ENCODE measurements at regions of chr3 and their contacts with region 1.

Region 1: GRCh38 chr3:52339612-52340011 is 23.5 kb downstream of the DNAH1 start:
- DNase-seq: peak; percentile 49
- H3K4me3 Mint-ChIP-seq: no peak overlapping the region
- H3K27ac Mint-ChIP-seq: no peak overlapping the region
- H3K4me1 Mint-ChIP-seq: peaks cover 8% of the 10 kb centered on the region
- H3K27me3 Mint-ChIP-seq: no peaks in the 10 kb centered on the region

Region 2: GRCh38 chr3:52001443-52001974 is 338.1 kb before region 1 on chr3:
- CTCF ChIA-PET with region 1: interaction called, 13 read pairs
- POLR2A ChIA-PET with region 1: interaction called, 3 read pairs
- DNase-seq: peak; percentile 87
- H3K4me3 Mint-ChIP-seq: no peak overlapping the region
- H3K27ac Mint-ChIP-seq: no peak overlapping the region
- H3K4me1 Mint-ChIP-seq: peaks cover 20% of the 10 kb centered on the region
- H3K27me3 Mint-ChIP-seq: peaks cover 10% of the 10 kb centered on the region

Region 3: DNA sequence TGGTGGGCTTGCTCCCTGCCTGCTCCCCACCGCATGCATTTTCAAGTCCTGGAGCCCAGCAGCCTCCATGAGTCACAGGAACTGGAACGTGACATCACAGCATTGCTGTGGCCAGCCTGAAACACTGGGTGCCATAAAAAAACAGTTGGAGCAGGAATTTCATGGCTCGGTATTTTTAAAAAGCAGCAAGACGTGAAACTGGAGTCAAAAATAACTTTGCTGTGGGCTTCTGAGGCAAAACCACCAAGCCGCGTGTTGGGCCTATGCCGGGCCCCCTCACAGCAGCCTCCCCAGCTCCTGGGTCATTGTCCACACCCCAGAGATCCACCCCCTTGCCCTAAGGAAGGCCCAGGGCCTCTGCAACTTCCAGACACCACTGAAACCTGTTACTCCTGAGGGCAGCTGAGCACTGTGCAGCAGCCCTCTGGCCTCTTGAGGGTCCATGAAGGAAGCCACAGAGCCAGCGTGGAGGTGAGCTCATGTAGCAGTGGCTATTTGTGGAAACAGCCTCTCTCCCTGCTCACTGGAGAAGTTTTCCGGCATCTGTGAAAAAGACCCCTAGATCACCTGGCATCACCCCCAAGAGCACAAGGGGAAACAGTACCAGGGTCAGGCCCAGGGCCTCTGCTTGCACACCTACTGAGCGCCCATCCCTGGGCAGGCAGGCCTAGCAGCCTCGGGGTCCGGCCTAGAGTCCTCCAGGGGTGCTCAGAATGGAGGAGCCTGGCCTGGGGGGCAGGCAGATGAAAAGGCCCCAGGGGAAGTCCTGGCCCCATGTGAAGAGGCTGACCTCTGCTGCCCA is 249.3 kb before region 1 on chr3:
- CTCF ChIA-PET with region 1: no interaction called
- POLR2A ChIA-PET with region 1: no interaction called
- DNase-seq: no peak
- H3K4me3 Mint-ChIP-seq: no peak overlapping the region
- H3K27ac Mint-ChIP-seq: no peak overlapping the region
- H3K4me1 Mint-ChIP-seq: peaks cover 23% of the 10 kb centered on the region
- H3K27me3 Mint-ChIP-seq: no peaks in the 10 kb centered on the region

Region 4: DNA sequence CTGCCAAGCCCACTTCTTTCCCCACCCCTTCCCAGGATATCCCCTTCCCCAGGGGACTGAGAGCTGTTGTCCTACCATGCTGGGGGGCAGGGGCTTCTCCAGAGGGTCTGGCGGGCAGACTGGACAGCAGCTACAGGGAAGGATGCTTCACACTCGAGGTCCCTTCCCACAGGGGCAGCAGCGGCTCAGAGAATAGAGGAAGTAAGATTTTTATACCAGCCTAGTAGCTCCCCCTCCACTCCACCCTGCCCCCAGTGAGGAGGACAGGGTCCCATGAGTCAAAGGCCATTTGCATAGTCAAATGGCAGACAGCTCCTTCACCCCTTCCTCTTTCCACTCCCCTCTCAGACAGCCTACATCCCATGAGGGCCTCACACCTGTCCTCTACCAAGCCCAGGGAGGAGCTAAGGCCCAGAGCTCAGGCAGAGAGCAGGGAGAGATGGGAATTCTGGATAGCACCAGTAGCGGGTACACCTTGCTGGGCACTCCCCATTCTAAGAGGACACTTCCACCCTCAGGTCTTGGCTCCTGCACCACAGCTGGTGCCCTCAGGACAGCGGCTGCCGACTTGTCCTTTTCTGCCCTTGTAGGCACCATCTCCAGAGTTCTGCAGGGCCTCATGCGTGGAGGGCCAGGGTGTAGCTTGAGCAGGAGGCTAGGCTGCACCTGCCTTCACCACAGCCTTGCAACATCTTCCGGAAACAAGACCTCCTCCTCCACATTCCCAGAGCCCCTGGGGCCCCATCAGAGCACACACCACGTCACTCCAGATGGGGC is 114.0 kb before region 1 on chr3 and contains the start of gene TLR9:
- CTCF ChIA-PET with region 1: interaction called, 147 read pairs
- POLR2A ChIA-PET with region 1: interaction called, 9 read pairs
- DNase-seq: no peak
- H3K4me3 Mint-ChIP-seq: no peak within 1 kb of the TSS
- H3K27ac Mint-ChIP-seq: peak within 1 kb of the TSS; percentile 68
- H3K4me1 Mint-ChIP-seq: peaks cover 58% of the 10 kb centered on the region
- H3K27me3 Mint-ChIP-seq: no peaks in the 10 kb centered on the region
- total RNA-seq, gene TLR9: 0.55 to 0.83 TPM

Region 5: DNA sequence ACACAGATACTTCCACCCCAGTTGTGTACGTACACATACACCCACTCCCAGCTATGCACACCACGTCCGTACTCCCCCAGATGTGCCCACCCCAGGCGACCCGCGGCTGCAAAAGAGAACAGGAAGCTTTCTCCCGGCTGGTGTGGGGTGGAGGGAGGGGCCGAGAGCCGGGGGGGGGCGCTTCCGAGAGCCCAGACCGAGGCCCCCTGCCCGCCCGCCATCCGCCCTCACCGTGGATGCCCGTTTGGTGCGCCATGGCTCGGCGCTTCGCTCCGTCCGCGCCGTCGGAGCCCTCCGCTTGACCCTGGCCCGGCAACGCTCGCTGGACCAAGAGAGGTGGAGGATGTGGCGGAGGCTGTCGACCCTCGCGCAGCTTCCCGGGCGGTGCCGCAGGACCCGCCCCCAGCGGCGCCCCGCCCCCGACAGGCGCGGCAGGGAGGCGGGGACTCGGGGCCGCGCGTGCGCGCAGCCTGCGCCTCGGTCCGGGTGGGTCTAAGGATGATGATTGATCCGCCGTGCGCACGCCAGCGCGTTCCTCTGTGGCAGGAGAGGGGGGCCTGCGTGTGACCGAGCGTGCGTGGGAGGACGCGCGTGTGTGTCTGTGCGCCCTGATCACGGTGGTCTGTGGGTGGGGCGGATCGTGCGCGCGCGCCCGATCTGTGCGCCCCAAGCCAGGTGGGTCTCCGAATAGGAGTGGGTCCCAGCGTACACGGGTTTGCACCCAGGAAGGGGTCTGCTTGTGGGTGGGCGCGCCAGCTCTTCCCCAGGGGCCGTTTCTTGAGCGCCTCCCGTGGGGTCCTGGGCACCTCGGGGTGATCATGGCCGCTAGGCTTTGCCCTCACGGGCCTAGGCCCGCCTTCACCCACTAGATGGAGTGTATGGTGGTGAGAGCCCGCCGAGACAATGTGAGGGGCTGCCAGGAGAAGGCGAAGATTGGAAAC is 100.6 kb before region 1 on chr3 and contains the start of gene TWF2:
- CTCF ChIA-PET with region 1: interaction called, 147 read pairs
- POLR2A ChIA-PET with region 1: interaction called, 7 read pairs
- DNase-seq: peak; percentile 87
- H3K4me3 Mint-ChIP-seq: peak within 1 kb of the TSS; percentile 95
- H3K27ac Mint-ChIP-seq: peak within 1 kb of the TSS; percentile 97
- H3K4me1 Mint-ChIP-seq: peaks cover 77% of the 10 kb centered on the region
- H3K27me3 Mint-ChIP-seq: no peaks in the 10 kb centered on the region
- total RNA-seq, gene TWF2: 118 to 119 TPM

Region 6: GRCh38 chr3:52317208-52318000 is 22.2 kb before region 1 on chr3:
- CTCF ChIA-PET with region 1: interaction called, 16 read pairs
- POLR2A ChIA-PET with region 1: interaction called, 3 read pairs
- DNase-seq: peak; percentile 79
- H3K4me3 Mint-ChIP-seq: peak overlapping the region; percentile 51
- H3K27ac Mint-ChIP-seq: no peak overlapping the region
- H3K4me1 Mint-ChIP-seq: peaks cover 26% of the 10 kb centered on the region
- H3K27me3 Mint-ChIP-seq: no peaks in the 10 kb centered on the region

Measured in activated CD4-positive, alpha-beta memory T cell treated with anti-CD3 and anti-CD28 coated beads, Interleukin-2, amount 10 ng/mL, durations not matched to agents 7 days and 5 days (primary cell).